ENCODE measurements at regions of chr3 and their contacts with region 1.

Region 1: GRCh38 chr3:46705022-46705530 is 3.9 kb downstream of the TMIE start:
- DNase-seq: peak; percentile 63 to 85 (median 71)
- ATAC-seq: peak; percentile 93
- H3K4me3 ChIP-seq: no peak overlapping the region
- H3K27ac ChIP-seq: no peak overlapping the region
- H3K4me1 ChIP-seq: peaks cover 1 to 18% of the 10 kb centered on the region in 2 donors
- H3K27me3 ChIP-seq: peaks cover 6 to 39% of the 10 kb centered on the region in 2 donors
- CTCF ChIP-seq: peak; percentile 97 to 98

Region 2: GRCh38 chr3:46909535-46910442 is 204.7 kb after region 1 on chr3:
- intact Hi-C with region 1: loop called in 1 of 2 experiments (anchors 5 kb)
- DNase-seq: peak; percentile 81 to 90 (median 86)
- ATAC-seq: peak; percentile 89
- H3K4me3 ChIP-seq: no peak overlapping the region
- H3K27ac ChIP-seq: no peak overlapping the region
- H3K4me1 ChIP-seq: peaks cover 12 to 15% of the 10 kb centered on the region in 2 donors
- H3K27me3 ChIP-seq: no peaks in the 10 kb centered on the region
- CTCF ChIP-seq: peak; percentile 74 to 77